ENCODE measurements at regions of chr6 and their contacts with region 1.

Region 1: DNA sequence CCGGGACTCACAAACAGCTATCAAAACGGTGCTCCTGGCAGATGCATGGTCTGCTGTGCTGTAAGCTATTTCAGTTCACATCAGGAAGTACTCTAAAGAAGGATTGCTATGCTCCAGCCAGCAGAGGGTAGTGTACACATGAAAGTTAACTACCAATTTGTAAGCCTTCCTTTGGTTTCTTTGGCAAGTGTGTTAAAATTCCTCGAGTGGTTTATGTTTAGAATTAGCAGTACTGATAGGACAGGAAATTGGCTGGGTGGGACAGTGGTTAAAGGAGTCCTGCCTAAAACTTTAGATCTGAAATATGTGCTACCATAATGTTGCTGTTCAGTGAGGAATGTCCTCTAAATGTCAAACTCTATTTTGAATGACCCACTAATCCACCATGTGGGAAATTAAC is 47.4 kb downstream of the TRMT11 start:
- DNase-seq: peak; percentile 60 to 68
- H3K4me3 ChIP-seq: no peak overlapping the region
- H3K4me3 Mint-ChIP-seq: no peak overlapping the region
- H3K27ac Mint-ChIP-seq: peak overlapping the region; percentile 48
- H3K4me1 ChIP-seq: peaks cover 54% of the 10 kb centered on the region
- H3K4me1 Mint-ChIP-seq: peaks cover 37% of the 10 kb centered on the region
- H3K27me3 ChIP-seq: no peaks in the 10 kb centered on the region
- H3K27me3 Mint-ChIP-seq: no peaks in the 10 kb centered on the region
- CTCF ChIP-seq: peak; percentile 47 to 78

Region 2: GRCh38 chr6:125918681-125919566 is 114.8 kb before region 1 on chr6:
- CTCF ChIA-PET with region 1: no interaction called
- POLR2A ChIA-PET with region 1: no interaction called
- intact Hi-C with region 1: no loop called
- DNase-seq: peak; percentile 73
- H3K4me3 ChIP-seq: peak overlapping the region; percentile 37
- H3K4me3 Mint-ChIP-seq: peak overlapping the region; percentile 73
- H3K27ac Mint-ChIP-seq: peak overlapping the region; percentile 92
- H3K4me1 ChIP-seq: peaks cover 47% of the 10 kb centered on the region
- H3K4me1 Mint-ChIP-seq: peaks cover 59% of the 10 kb centered on the region
- H3K27me3 ChIP-seq: no peaks in the 10 kb centered on the region
- H3K27me3 Mint-ChIP-seq: no peaks in the 10 kb centered on the region
- CTCF ChIP-seq: no peak

Region 3: GRCh38 chr6:126063512-126064146 is 29.9 kb after region 1 on chr6:
- CTCF ChIA-PET with region 1: no interaction called
- POLR2A ChIA-PET with region 1: no interaction called
- intact Hi-C with region 1: no loop called
- DNase-seq: no peak
- H3K4me3 ChIP-seq: no peak overlapping the region
- H3K4me3 Mint-ChIP-seq: peak overlapping the region; percentile 14
- H3K27ac Mint-ChIP-seq: peak overlapping the region; percentile 34
- H3K4me1 ChIP-seq: peaks cover 21% of the 10 kb centered on the region
- H3K4me1 Mint-ChIP-seq: peaks cover 23% of the 10 kb centered on the region
- H3K27me3 ChIP-seq: no peaks in the 10 kb centered on the region
- H3K27me3 Mint-ChIP-seq: no peaks in the 10 kb centered on the region
- CTCF ChIP-seq: no peak

Region 4: GRCh38 chr6:126077810-126078776 is 44.4 kb after region 1 on chr6:
- CTCF ChIA-PET with region 1: no interaction called
- POLR2A ChIA-PET with region 1: no interaction called
- intact Hi-C with region 1: loop called (anchors 1 kb)
- DNase-seq: no peak
- H3K4me3 ChIP-seq: no peak overlapping the region
- H3K4me3 Mint-ChIP-seq: no peak overlapping the region
- H3K27ac Mint-ChIP-seq: no peak overlapping the region
- H3K4me1 ChIP-seq: peaks cover 26% of the 10 kb centered on the region
- H3K4me1 Mint-ChIP-seq: peaks cover 6% of the 10 kb centered on the region
- H3K27me3 ChIP-seq: no peaks in the 10 kb centered on the region
- H3K27me3 Mint-ChIP-seq: no peaks in the 10 kb centered on the region
- CTCF ChIP-seq: no peak

Region 5: DNA sequence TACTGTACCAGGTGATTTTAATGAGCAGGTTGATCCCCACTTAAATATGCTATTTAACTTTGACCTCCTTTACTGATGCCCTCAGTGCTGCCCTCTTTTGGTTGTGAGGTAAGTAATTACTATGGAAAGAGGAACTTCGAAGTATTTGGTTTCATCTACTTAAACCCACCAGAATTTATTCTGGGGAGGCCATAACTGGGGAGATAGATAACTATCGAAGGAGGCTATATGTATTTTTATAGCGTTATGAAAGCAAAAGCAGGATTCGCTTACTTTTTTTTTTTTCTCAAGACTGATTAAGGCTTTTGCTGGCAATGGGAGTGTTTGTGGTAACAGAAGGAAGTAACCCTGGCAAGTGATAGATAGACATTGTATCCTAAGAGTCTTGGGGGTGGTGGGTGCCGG is 137.3 kb after region 1 on chr6:
- CTCF ChIA-PET with region 1: interaction called, 5 read pairs
- POLR2A ChIA-PET with region 1: no interaction called
- intact Hi-C with region 1: loop called (anchors 1 kb)
- DNase-seq: peak in 1 of 2 experiments; percentile 46
- H3K4me3 ChIP-seq: no peak overlapping the region
- H3K4me3 Mint-ChIP-seq: no peak overlapping the region
- H3K27ac Mint-ChIP-seq: no peak overlapping the region
- H3K4me1 ChIP-seq: peaks cover 4% of the 10 kb centered on the region; the same call in 1 of the 2 replicates
- H3K4me1 Mint-ChIP-seq: peaks cover 16% of the 10 kb centered on the region
- H3K27me3 ChIP-seq: no peaks in the 10 kb centered on the region
- H3K27me3 Mint-ChIP-seq: no peaks in the 10 kb centered on the region
- CTCF ChIP-seq: peak; percentile 35 to 41

Region 6: DNA sequence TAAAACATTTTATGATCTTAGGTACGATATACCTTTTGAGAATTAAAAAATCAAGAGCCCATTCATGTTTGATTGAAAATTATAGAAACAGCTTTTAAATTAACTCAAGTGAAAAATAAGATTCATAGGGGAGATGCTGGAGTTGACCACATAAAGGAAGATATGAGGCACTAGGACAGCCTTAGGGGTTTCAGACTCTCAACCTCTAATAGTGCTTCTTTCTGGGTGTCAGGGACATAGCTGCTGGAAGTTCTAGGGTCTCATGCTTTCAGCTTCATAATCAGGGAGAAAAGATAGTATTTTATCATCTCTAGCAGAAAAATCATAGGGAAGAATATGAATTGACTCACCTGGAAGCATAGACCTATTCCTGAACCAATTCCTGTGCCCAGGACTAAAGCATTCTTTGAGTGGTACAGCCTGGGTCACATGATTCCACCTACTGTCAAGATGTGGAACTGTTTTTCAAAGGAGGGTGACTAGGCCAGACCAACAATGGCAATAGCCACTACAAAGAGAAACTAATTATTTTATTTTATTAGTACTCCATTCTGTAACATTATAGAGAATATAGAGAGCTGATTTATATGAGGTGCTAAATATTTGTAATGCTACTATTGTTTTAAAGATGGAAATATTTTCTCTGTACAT is 278.4 kb after region 1 on chr6:
- CTCF ChIA-PET with region 1: no interaction called
- POLR2A ChIA-PET with region 1: no interaction called
- intact Hi-C with region 1: loop called (anchors 1 kb)
- DNase-seq: peak in 1 of 2 experiments; percentile 40
- H3K4me3 ChIP-seq: no peak overlapping the region
- H3K4me3 Mint-ChIP-seq: no peak overlapping the region
- H3K27ac Mint-ChIP-seq: no peak overlapping the region
- H3K4me1 ChIP-seq: no peaks in the 10 kb centered on the region
- H3K4me1 Mint-ChIP-seq: no peaks in the 10 kb centered on the region
- H3K27me3 ChIP-seq: no peaks in the 10 kb centered on the region
- H3K27me3 Mint-ChIP-seq: peaks cover 2% of the 10 kb centered on the region
- CTCF ChIP-seq: peak; percentile 32 to 48

Region 7: GRCh38 chr6:126657561-126658175 is 624.0 kb after region 1 on chr6:
- CTCF ChIA-PET with region 1: no interaction called
- POLR2A ChIA-PET with region 1: no interaction called
- intact Hi-C with region 1: loop called (anchors 5 kb)
- DNase-seq: peak in 1 of 2 experiments; percentile 8
- H3K4me3 ChIP-seq: no peak overlapping the region
- H3K4me3 Mint-ChIP-seq: no peak overlapping the region
- H3K27ac Mint-ChIP-seq: no peak overlapping the region
- H3K4me1 ChIP-seq: no peaks in the 10 kb centered on the region
- H3K4me1 Mint-ChIP-seq: no peaks in the 10 kb centered on the region
- H3K27me3 ChIP-seq: no peaks in the 10 kb centered on the region
- H3K27me3 Mint-ChIP-seq: no peaks in the 10 kb centered on the region
- CTCF ChIP-seq: peak; percentile 20 to 25